HepG2 (cell line): ENCODE measurements at regions of chrX and their contacts with region 1.

Region 1: DNA sequence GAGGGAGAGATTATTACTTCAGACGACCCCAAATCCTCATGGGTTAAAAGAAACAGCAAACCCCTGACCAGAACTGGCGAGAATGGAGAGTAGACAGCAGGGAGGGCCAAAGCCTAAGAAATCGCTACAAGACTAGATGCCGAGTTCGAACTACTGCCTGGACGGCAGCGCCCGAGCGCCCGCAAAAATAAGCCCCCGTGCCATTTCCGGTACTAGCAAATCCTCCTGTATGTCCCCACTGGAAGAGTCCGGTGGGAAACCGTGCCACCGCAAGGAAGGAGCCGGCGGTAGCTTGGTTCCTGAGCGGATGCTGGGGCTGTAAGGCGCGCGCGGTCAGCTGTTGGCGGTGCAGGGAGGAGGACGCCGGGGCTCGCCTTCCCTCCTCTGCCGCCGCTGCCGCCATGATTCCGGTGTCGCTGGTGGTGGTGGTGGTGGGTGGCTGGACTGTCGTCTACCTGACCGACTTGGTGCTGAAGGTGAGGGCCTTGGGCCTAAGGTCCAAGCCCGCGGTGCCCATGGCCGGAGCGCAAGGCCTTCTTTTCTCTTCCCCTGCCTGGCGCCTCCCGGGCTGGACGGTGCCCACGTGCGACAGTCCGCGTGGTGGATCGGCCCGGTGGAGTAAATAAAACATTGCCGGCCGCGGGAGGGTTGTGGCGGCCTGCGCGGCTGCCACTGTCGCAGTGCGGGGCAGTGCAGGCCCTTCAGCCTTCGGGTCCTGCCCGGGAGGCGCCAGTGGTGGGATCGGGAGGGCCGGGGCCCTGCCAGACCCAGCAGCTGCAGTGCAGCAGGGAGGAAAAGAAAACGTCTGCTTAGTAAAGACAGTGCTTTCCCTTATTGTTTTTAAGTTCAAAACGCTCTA is at the start of gene MBTPS2:
- DNase-seq: peak; percentile 69
- ATAC-seq: peak; percentile 92
- H3K4me3 ChIP-seq: peak within 1 kb of the TSS; percentile 74 to 87 (median 83)
- H3K27ac ChIP-seq: peak within 1 kb of the TSS; percentile 78
- H3K4me1 ChIP-seq: peaks cover 31% of the 10 kb centered on the region
- H3K27me3 ChIP-seq: no peaks in the 10 kb centered on the region
- CTCF ChIP-seq: peak; percentile 37; the same call in 1 of the 2 replicates
- EP300 ChIP-seq: no peak
- POLR2A ChIP-seq: peak; percentile 58 to 75
- RAD21 ChIP-seq: peak; percentile 43; the same call in 1 of the 2 replicates
- total RNA-seq, gene MBTPS2: 5.7 and 7.7 TPM in 2 replicates

Region 2: DNA sequence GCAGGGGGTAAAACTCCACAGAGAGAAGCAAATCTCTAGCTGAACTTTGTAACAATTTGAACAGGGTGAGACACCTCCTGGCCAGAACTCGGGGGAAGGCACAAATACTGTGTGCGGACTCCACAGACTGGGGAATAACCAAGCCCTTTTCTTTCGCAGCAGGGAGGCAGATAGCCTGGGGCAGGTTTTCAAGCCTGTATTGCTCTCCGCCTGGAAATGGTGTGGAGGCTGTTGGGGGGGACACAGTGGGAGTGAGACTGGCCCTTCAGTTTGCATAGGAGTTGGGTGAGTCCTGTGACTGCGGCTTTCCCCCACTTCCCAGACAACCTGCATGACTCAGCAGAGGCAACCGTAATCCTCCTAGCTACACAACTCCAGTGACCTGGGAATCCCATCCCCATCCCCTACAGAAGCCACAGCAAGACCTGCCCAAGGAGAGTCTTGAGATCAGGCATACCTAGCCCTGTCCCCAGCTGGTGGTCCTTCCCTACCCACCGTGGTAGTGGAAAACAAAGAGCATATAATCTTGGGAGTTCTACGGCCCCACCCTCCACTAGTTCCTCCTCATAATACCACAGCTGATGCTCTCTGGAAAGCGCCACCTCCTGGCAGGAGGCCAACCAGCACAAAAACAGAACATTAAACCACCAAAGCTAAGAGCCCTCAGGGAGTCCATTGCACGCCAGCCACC is 68.8 kb before region 1 on chrX:
- CTCF ChIA-PET with region 1: no interaction called
- POLR2A ChIA-PET with region 1: interaction called, 18 read pairs
- in situ Hi-C with region 1: no loop called
- intact Hi-C with region 1: no loop called
- DNase-seq: peak; percentile 58
- ATAC-seq: peak; percentile 95
- H3K4me3 ChIP-seq: peak overlapping the region; percentile 51 to 73 (median 64); a peak in 5 of 6 replicates
- H3K27ac ChIP-seq: peak overlapping the region; percentile 92
- H3K4me1 ChIP-seq: peaks cover 12% of the 10 kb centered on the region
- H3K27me3 ChIP-seq: no peaks in the 10 kb centered on the region; a peak in 1 of 5 replicates
- CTCF ChIP-seq: peak; percentile 74
- EP300 ChIP-seq: no peak
- POLR2A ChIP-seq: peak in 1 of 2 experiments; percentile 32; a peak in 2 of 4 replicates
- RAD21 ChIP-seq: no peak

Region 3: GRCh38 chrX:21940356-21940829 is 100.8 kb after region 1 on chrX and contains the start of gene SMS:
- CTCF ChIA-PET with region 1: no interaction called
- POLR2A ChIA-PET with region 1: no interaction called
- in situ Hi-C with region 1: no loop called
- intact Hi-C with region 1: loop called (anchors 10 kb)
- DNase-seq: peak; percentile 32
- ATAC-seq: peak; percentile 83
- H3K4me3 ChIP-seq: peak within 1 kb of the TSS; percentile 60 to 64 (median 62); a peak in 5 of 6 replicates
- H3K27ac ChIP-seq: peak within 1 kb of the TSS; percentile 40
- H3K4me1 ChIP-seq: peaks cover 33% of the 10 kb centered on the region
- H3K27me3 ChIP-seq: no peaks in the 10 kb centered on the region
- CTCF ChIP-seq: no peak
- EP300 ChIP-seq: no peak
- POLR2A ChIP-seq: peak; percentile 34 to 70; a peak in 3 of 4 replicates
- RAD21 ChIP-seq: no peak
- total RNA-seq, gene SMS: 91.9 and 115 TPM in 2 replicates

Region 4: GRCh38 chrX:21972721-21973120 is 133.2 kb after region 1 on chrX:
- CTCF ChIA-PET with region 1: no interaction called
- POLR2A ChIA-PET with region 1: no interaction called
- in situ Hi-C with region 1: no loop called
- intact Hi-C with region 1: loop called (anchors 10 kb)
- DNase-seq: no peak
- ATAC-seq: no peak; the same call in 2 of the 3 replicates
- H3K4me3 ChIP-seq: no peak overlapping the region
- H3K27ac ChIP-seq: no peak overlapping the region
- H3K4me1 ChIP-seq: no peaks in the 10 kb centered on the region
- H3K27me3 ChIP-seq: no peaks in the 10 kb centered on the region
- CTCF ChIP-seq: no peak
- EP300 ChIP-seq: no peak
- POLR2A ChIP-seq: no peak
- RAD21 ChIP-seq: no peak

Region 5: GRCh38 chrX:22004866-22005265 is 165.3 kb after region 1 on chrX:
- CTCF ChIA-PET with region 1: no interaction called
- POLR2A ChIA-PET with region 1: no interaction called
- in situ Hi-C with region 1: no loop called
- intact Hi-C with region 1: no loop called
- DNase-seq: no peak
- ATAC-seq: no peak
- H3K4me3 ChIP-seq: no peak overlapping the region
- H3K27ac ChIP-seq: no peak overlapping the region
- H3K4me1 ChIP-seq: peaks cover 4% of the 10 kb centered on the region; the same call in 1 of the 2 replicates
- H3K27me3 ChIP-seq: no peaks in the 10 kb centered on the region
- CTCF ChIP-seq: no peak
- EP300 ChIP-seq: no peak
- POLR2A ChIP-seq: no peak
- RAD21 ChIP-seq: no peak

Region 6: DNA sequence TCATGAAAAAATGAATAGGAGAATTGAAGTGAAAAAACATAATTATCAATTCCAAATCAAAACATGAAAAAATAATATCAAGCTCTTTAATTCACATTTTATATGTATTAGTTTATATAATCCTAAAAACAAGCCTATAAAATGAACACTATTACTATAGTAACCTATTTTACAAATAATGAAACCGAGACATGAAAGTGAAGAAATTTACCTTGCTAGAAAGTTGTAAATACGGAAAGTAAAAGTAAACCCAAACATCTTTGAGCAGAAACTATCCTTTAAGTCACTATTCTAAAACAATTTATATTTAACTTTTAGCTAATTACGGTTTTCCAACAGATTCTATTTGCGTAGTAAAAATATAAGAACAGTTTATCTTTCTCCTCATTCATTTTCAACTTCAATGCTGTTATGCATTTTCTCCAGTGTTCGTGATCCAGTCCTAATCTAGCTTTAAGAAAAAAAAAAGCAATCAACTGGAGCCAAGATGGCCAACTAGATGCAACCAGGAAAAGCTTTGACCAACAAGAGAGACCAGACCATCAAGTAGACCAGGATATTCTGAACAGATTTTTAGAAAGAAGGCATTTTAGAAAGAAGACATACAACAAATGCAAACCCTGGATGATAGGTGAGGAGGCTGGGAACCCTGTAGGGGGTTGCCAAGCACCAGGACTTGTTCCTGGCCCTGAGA is 1227.2 kb after region 1 on chrX:
- CTCF ChIA-PET with region 1: no interaction called
- POLR2A ChIA-PET with region 1: no interaction called
- in situ Hi-C with region 1: no loop called
- intact Hi-C with region 1: no loop called
- DNase-seq: no peak
- ATAC-seq: no peak
- H3K4me3 ChIP-seq: no peak overlapping the region
- H3K27ac ChIP-seq: no peak overlapping the region
- H3K4me1 ChIP-seq: no peaks in the 10 kb centered on the region
- H3K27me3 ChIP-seq: no peaks in the 10 kb centered on the region
- CTCF ChIP-seq: no peak
- EP300 ChIP-seq: no peak
- POLR2A ChIP-seq: no peak
- RAD21 ChIP-seq: no peak